Activated T-helper 2 cell treated with anti-CD3 and anti-CD28 coated beads, Interferon-gamma antibody, Interleukin-2, Interleukin-4, amounts not matched to agents 10 μg/mL and 5 μg/mL and 100 μg/mL, durations not matched to agents 14 hours and 24 hours and 36 hours (primary cell): ENCODE measurements at regions of chr20 and their contacts with region 1.

Region 1: GRCh38 chr20:45857114-45857881 is at the starts of genes ACOT8 and ZSWIM3:
- DNase-seq: peak; percentile 95
- H3K4me3 Mint-ChIP-seq: peak within 1 kb of the TSS; percentile 97
- H3K27ac Mint-ChIP-seq: peak within 1 kb of the TSS; percentile 99
- H3K4me1 Mint-ChIP-seq: peaks cover 30% of the 10 kb centered on the region
- H3K27me3 Mint-ChIP-seq: no peaks in the 10 kb centered on the region
- total RNA-seq, gene ACOT8: 28.0 and 29.1 TPM in 2 replicates
- total RNA-seq, gene ZSWIM3: 6.2 and 6.3 TPM in 2 replicates

Region 2: DNA sequence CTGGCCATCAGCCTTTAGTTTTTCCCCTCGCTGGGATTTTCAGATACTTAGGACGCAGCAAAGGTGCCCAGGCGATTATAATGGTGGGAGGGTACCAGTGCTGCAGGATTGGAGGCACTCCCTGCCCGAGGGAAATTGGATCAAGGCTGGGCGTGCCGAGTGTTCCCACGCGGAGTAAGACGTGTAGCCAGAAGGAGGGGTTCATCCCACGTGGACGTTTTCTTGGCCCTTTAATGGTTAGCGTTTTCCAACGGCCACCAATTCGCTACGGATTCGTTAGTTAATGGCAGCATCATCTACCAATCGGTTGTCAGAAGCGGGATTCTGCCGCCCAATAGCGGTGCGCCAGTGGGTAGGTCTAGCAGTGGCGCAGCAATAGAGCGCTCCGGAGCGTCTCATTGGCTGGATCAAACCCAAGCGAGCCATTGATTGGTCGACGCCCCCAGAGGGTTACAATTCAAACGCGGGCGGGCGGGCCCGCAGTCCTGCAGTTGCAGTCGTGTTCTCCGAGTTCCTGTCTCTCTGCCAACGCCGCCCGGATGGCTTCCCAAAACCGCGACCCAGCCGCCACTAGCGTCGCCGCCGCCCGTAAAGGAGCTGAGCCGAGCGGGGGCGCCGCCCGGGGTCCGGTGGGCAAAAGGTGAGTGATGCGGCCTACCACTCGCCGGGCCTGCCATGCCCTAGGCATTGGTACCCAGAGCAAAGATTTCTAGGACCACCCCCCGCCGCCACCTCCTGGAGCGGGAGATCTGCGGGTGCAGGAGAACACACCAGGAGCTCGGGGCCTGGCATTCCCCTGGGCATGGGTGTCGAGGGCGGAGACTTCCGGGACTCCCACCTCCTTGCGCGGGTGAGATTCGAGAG is 44.9 kb before region 1 on chr20 and contains the start of gene UBE2C:
- intact Hi-C with region 1: loop called (anchors 5 kb)
- DNase-seq: peak; percentile 96
- H3K4me3 Mint-ChIP-seq: peak within 1 kb of the TSS; percentile 90
- H3K27ac Mint-ChIP-seq: peak within 1 kb of the TSS; percentile 80
- H3K4me1 Mint-ChIP-seq: peaks cover 24% of the 10 kb centered on the region
- H3K27me3 Mint-ChIP-seq: no peaks in the 10 kb centered on the region
- total RNA-seq, gene UBE2C: 142 and 145 TPM in 2 replicates

Region 3: GRCh38 chr20:45880988-45881788 is 23.9 kb after region 1 on chr20 and contains the start of gene ZSWIM1:
- intact Hi-C with region 1: loop called (anchors 1 kb)
- DNase-seq: peak; percentile 98
- H3K4me3 Mint-ChIP-seq: peak within 1 kb of the TSS; percentile 95
- H3K27ac Mint-ChIP-seq: peak within 1 kb of the TSS; percentile 81
- H3K4me1 Mint-ChIP-seq: peaks cover 31% of the 10 kb centered on the region
- H3K27me3 Mint-ChIP-seq: no peaks in the 10 kb centered on the region
- total RNA-seq, gene ZSWIM1: 9.3 and 10.3 TPM in 2 replicates

Region 4: GRCh38 chr20:45910670-45911485 is 53.6 kb after region 1 on chr20:
- intact Hi-C with region 1: loop called (anchors 2 kb)
- DNase-seq: peak; percentile 89
- H3K4me3 Mint-ChIP-seq: peak overlapping the region; percentile 72
- H3K27ac Mint-ChIP-seq: peak overlapping the region; percentile 85
- H3K4me1 Mint-ChIP-seq: peaks cover 7% of the 10 kb centered on the region
- H3K27me3 Mint-ChIP-seq: peaks cover 6% of the 10 kb centered on the region

Region 5: DNA sequence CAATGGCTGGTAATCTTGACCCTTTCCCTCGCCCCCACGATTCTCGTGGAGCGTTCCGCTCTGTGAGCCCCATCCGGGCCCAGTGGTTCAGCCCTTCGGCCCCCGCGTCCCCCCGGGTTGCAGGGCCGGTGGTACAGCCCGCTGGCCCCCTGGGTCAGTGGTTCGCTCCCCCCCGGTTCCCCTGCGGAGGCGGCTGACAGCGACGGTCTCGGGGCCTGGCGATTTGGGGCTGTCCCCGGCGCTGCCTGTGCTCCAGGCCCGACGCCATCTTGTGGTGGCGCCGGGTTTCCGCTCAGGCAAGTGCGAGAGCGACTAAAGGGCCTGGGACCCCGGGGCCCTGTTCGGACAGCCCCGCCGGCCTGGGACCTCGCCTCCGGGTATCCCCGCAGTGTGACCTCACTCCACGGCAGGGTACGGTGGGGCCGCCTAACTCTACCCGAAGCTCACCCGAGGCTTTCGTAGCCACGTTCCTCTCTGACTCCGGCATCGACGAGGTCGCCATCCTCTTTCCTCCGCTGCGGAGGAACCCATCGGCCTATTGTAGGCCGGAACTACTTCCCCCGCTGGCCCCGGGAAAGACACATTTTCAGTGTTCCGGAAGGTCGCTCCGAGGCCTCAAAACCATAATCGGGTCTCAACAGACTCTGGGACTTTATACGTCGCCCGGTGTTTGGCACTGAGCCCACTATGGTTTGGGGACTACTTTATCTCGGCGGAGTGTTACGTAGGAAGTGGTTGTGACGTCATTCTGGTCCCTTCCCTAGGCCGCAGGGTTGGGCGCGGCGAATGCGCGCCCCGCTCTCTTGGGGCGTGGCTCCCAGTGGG is 114.6 kb after region 1 on chr20 and contains the start of gene ZNF335:
- intact Hi-C with region 1: loop called (anchors 2 kb)
- DNase-seq: peak; percentile 93
- H3K4me3 Mint-ChIP-seq: peak within 1 kb of the TSS; percentile 85
- H3K27ac Mint-ChIP-seq: peak within 1 kb of the TSS; percentile 99
- H3K4me1 Mint-ChIP-seq: peaks cover 10% of the 10 kb centered on the region
- H3K27me3 Mint-ChIP-seq: peaks cover 7% of the 10 kb centered on the region
- total RNA-seq, gene ZNF335: 35.7 and 36.1 TPM in 2 replicates